ENCODE measurements at regions of chr20 and their contacts with region 1.

Region 1: DNA sequence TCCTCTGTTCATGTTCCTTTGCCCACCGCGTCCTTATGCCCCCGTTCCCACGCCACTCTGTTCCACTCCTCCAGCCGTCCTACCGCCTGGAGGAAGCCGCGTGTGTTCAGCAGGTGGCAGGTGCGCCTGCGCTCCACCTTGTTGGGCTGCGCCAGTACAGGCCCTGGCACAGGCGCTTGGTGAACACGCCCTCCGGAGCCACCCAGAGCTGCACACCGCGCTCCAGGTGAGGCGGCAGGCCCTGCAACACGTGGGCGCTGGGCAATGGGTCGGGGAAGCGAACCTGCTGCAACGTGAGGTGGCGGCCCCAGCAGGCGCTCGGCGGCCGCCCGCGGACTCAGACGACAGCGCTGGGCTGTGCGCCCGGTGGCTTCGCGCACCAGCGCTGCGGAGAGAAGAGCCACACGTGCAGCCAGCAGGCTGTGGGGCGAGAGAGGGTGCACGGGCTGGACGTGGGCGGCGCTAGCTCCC is 4.1 kb upstream of the FOXS1 start:
- DNase-seq: no peak
- ATAC-seq: no peak
- H3K4me3 ChIP-seq: no peak overlapping the region
- H3K27ac ChIP-seq: no peak overlapping the region
- H3K4me1 ChIP-seq: no peaks in the 10 kb centered on the region
- H3K27me3 ChIP-seq: no peaks in the 10 kb centered on the region
- CTCF ChIP-seq: no peak
- POLR2A ChIP-seq: no peak
- RAD21 ChIP-seq: no peak

Region 2: DNA sequence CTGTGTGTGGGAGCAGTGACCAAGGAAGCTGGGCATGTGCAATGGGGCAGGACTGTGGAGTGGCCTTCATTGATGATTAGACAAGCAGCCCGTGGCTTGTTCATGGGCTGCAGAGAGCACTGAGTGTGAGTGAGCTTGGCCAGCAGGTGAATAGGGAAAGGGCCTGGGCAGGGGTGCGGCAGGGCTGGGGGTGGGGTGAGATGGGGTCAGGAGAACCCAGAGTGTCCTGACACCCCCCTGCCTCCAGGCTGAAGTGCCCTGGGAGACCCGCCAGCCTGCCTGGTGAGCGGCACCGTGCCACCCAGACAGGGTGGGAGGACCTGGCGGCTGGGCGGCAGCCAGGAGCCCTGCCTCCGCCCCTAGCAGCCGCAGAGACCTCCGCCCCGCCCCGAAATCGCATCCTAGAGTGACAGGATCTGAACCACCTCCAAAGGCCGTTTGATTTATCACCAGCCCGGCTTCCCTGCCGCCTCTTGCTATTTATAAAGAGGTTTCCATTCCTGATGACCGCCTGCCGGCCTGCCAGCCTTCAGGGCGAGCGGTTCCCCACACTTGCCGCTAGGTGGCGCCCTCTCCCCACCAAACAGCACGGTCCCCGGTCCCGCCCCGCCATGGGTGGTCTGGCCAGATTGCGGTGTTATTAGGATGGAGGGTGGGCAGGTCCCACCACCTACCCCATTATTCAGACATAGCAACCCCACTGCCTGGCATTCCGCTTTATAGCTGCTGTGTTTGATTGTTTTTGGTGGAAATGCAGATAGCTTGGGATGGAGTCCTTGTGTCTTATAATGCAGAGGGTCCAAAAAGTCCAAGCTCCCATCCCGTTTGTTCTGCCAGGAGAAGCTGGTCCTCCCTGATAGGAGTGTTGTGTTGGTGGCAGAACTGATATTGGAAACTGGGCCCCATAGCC is 26.8 kb before region 1 on chr20:
- CTCF ChIA-PET with region 1: interaction called, 17 read pairs
- POLR2A ChIA-PET with region 1: no interaction called
- RAD21 ChIA-PET with region 1: interaction called, 4 to 6 read pairs
- intact Hi-C with region 1: loop called (anchors 1 kb)
- DNase-seq: no peak
- ATAC-seq: peak; percentile 92
- H3K4me3 ChIP-seq: no peak overlapping the region; a peak in 1 of 4 replicates
- H3K27ac ChIP-seq: no peak overlapping the region
- H3K4me1 ChIP-seq: peaks cover 0 to 9% of the 10 kb centered on the region in 2 experiments; a peak in 1 of 4 replicates
- H3K27me3 ChIP-seq: no peaks in the 10 kb centered on the region
- CTCF ChIP-seq: peak; percentile 91 to 99 (median 95)
- POLR2A ChIP-seq: no peak
- RAD21 ChIP-seq: peak; percentile 98

Region 3: GRCh38 chr20:31861346-31862156 is 12.1 kb after region 1 on chr20:
- CTCF ChIA-PET with region 1: interaction called, 20 read pairs
- POLR2A ChIA-PET with region 1: no interaction called
- RAD21 ChIA-PET with region 1: no interaction called
- intact Hi-C with region 1: no loop called
- DNase-seq: peak; percentile 35
- ATAC-seq: peak; percentile 93
- H3K4me3 ChIP-seq: peak overlapping the region; percentile 59 to 71
- H3K27ac ChIP-seq: peak overlapping the region; percentile 30; the same call in 1 of the 2 replicates
- H3K4me1 ChIP-seq: peaks cover 15 to 20% of the 10 kb centered on the region in 2 experiments; a peak in 3 of 4 replicates
- H3K27me3 ChIP-seq: no peaks in the 10 kb centered on the region; the same call in 1 of the 2 replicates
- CTCF ChIP-seq: no peak
- POLR2A ChIP-seq: no peak
- RAD21 ChIP-seq: no peak

Region 4: GRCh38 chr20:32031007-32031958 is 181.8 kb after region 1 on chr20:
- CTCF ChIA-PET with region 1: interaction called, 36 read pairs
- POLR2A ChIA-PET with region 1: interaction called, 3 read pairs
- RAD21 ChIA-PET with region 1: interaction called in 1 of 2 experiments, 4 read pairs
- intact Hi-C with region 1: loop called (anchors 1 kb)
- DNase-seq: peak; percentile 84
- ATAC-seq: peak; percentile 99
- H3K4me3 ChIP-seq: no peak overlapping the region
- H3K27ac ChIP-seq: no peak overlapping the region
- H3K4me1 ChIP-seq: peaks cover 4 to 6% of the 10 kb centered on the region in 2 experiments; a peak in 2 of 4 replicates
- H3K27me3 ChIP-seq: peaks cover 25% of the 10 kb centered on the region
- CTCF ChIP-seq: peak; percentile 92 to 99 (median 95)
- POLR2A ChIP-seq: no peak
- RAD21 ChIP-seq: peak; percentile 89

Region 5: DNA sequence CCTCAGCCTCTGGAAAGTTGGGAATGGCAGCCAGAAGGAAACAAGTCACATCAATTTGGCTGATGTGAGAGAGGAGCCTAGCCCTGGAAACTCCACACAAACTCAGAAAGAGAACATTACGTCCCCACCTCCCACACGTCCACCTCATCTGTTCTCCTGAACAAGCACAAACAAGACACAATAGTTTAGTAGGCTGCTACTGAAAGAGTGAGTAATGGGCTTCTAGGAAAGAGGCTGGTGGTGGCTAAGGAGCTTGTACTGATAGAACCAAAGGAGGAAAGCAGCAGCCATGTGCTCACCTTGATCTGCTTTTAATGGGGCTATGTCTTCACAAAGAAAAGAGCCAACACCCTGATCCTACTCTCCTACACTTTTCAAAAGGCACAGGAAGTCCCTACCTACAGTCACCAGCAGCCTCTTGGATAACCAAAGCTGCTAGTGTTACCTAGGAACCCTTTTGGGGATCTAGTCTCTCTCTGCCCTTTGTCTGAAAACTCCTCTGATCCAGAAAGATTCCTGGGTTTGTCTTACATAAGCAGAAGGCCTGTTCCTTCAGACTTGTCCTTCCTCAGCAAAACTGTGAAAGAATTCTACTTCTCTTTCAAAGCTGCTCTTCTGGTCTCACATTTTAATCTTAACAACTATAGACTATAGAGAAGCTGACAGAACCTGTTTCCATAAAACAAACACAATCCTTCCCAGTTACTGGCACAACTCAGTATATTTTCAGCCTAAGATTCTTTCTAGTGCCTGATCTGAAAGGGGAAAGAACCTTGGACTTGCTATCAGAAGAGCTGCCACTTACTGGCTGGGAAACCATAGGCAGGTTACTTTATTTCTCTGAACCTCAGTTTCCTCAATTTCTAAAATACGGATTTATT is 355.0 kb after region 1 on chr20:
- CTCF ChIA-PET with region 1: no interaction called
- POLR2A ChIA-PET with region 1: no interaction called
- RAD21 ChIA-PET with region 1: no interaction called
- intact Hi-C with region 1: no loop called
- DNase-seq: no peak
- ATAC-seq: no peak
- H3K4me3 ChIP-seq: no peak overlapping the region
- H3K27ac ChIP-seq: no peak overlapping the region
- H3K4me1 ChIP-seq: peaks cover 6 to 27% of the 10 kb centered on the region in 2 experiments; a peak in 3 of 4 replicates
- H3K27me3 ChIP-seq: no peaks in the 10 kb centered on the region
- CTCF ChIP-seq: no peak
- POLR2A ChIP-seq: no peak
- RAD21 ChIP-seq: no peak

Region 6: DNA sequence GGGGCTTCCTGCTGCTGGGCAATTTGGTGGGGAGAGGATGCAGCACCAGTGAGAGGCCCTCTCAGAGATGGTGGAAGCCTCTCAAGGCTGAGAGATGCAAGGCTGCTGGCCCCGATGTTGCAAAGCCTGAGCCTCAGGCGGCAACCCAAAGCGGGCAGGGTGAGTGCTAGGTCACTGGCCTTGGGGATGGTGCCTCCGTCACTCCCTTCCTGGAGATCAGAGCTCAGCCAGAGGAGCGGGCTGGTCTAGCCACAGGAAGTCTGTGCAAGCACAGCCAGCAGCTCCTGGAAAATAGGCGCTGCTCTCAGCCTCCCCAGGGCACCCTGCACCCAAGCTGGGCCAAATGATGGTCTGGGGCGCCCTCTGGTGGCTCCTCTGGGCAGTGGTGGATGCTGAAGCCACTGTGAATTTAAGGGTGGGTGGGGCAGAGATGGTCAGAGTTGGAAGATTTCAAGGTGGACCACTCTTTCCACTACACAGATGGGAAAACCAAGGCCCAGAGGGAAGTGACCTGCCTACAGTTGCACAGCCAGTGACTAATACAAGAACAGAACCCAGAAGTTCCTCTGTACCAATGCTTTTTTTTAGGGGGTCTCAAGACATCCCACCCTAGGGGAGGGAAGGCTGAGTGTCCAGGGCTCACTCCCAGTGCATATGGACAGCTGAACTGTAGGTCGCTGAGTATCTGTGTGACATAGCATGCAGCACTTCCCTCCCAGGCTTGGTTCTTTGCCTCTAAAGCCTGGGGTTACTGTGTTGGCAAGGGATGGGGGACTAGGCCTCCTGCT is 803.4 kb after region 1 on chr20:
- CTCF ChIA-PET with region 1: interaction called, 10 read pairs
- POLR2A ChIA-PET with region 1: no interaction called
- RAD21 ChIA-PET with region 1: no interaction called
- intact Hi-C with region 1: loop called (anchors 5 kb)
- DNase-seq: peak; percentile 54
- ATAC-seq: peak; percentile 96
- H3K4me3 ChIP-seq: no peak overlapping the region
- H3K27ac ChIP-seq: no peak overlapping the region
- H3K4me1 ChIP-seq: peaks cover 0 to 11% of the 10 kb centered on the region in 2 experiments; a peak in 1 of 4 replicates
- H3K27me3 ChIP-seq: no peaks in the 10 kb centered on the region
- CTCF ChIP-seq: peak; percentile 87 to 91 (median 88)
- POLR2A ChIP-seq: no peak
- RAD21 ChIP-seq: peak; percentile 99

Measured in HCT116 (cell line).